Right lobe of liver (tissue), 6 donors: ENCODE measurements at regions of chrX and their contacts with region 1.

Region 1: GRCh38 chrX:132615391-132616131 is 126.7 kb upstream of the MBNL3 start:
- DNase-seq: peak in 2 of 3 donors; percentile 24 to 45
- ATAC-seq: peak; percentile 66 to 71 (median 69)
- H3K4me3 ChIP-seq: no peak overlapping the region
- H3K27ac ChIP-seq: no peak overlapping the region
- H3K4me1 ChIP-seq: no peaks in the 10 kb centered on the region
- H3K27me3 ChIP-seq: peaks cover 0 to 6% of the 10 kb centered on the region in 2 donors
- CTCF ChIP-seq: peak; percentile 35 to 60 (median 48)
- POLR2A ChIP-seq: no peak

Region 2: DNA sequence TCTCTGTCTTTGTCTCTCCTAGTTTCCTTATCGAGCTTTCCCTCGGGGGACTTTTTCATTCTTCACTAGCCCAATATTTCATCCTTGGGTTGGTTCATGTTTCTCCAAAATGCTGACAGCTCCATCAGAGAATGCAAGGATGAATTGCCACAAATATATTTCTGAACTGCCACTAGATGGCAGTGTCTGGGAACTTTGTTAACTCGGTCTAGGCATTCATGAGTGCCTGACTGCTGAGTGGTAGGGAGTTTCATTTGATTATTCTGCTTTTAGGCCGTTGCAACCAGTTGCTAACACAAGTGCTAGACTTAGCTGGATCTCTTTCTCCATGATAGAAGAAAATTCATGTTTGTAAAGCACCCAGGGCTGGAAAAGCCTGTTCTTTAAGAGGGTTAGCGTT is 322.8 kb before region 1 on chrX:
- intact Hi-C with region 1: loop called in 1 of 2 experiments (anchors 10 kb)
- DNase-seq: peak in 1 of 3 donors; percentile 40
- ATAC-seq: peak; percentile 85 to 94 (median 92)
- H3K4me3 ChIP-seq: no peak overlapping the region
- H3K27ac ChIP-seq: no peak overlapping the region
- H3K4me1 ChIP-seq: no peaks in the 10 kb centered on the region
- H3K27me3 ChIP-seq: no peaks in the 10 kb centered on the region
- CTCF ChIP-seq: peak; percentile 69 to 78 (median 74)
- POLR2A ChIP-seq: no peak